HEK293 (cell line): ENCODE measurements at regions of chr2 and their contacts with region 1.

Region 1: GRCh38 chr2:26846328-26847306 is 1.3 kb upstream of the DPYSL5 start:
- H3K4me3 ChIP-seq: no peak overlapping the region
- H3K27ac ChIP-seq: no peak overlapping the region; the same call in 1 of the 2 replicates
- H3K4me1 ChIP-seq: peaks cover 3% of the 10 kb centered on the region
- CTCF ChIP-seq: peak; percentile 95

Region 2: DNA sequence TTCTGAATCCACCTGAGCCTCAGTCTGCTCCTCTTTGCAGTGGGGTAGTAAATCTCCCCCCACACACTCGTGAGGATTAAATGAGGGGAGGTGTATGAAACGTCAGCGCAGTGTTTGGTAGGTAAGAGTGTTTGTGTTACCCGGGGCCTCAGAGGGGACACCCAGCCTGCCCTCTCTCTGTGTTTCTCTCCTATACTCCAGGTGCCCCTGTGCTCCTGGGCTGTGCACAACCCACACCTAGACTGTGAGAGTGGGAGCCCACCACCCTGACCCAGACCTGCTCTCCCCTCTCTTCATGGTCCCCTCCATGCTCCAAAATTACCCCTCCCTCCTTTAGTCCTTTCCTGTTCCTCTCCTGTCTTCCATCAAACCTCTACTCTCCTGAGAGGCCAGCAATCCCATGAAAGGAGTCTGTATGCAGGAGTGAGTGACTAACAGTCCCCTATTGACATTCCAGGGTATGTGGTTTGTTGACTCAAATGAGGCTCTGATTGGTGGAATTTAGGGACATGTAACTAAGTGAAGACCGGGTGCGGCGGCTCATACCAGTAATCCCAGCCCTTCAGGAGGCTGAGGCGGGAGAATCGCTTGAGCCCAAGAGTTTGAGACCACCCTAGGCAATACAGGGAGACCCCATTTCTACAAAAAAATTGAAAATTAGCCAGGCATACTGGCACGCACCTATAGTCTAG is 215.8 kb before region 1 on chr2:
- CTCF ChIA-PET with region 1: no interaction called
- POLR2A ChIA-PET with region 1: no interaction called
- H3K4me3 ChIP-seq: no peak overlapping the region
- H3K27ac ChIP-seq: no peak overlapping the region
- H3K4me1 ChIP-seq: no peaks in the 10 kb centered on the region
- CTCF ChIP-seq: no peak

Region 3: GRCh38 chr2:26911911-26912861 is 65.6 kb after region 1 on chr2:
- CTCF ChIA-PET with region 1: interaction called, 28 read pairs
- POLR2A ChIA-PET with region 1: interaction called, 5 read pairs
- H3K4me3 ChIP-seq: no peak overlapping the region
- H3K27ac ChIP-seq: no peak overlapping the region
- H3K4me1 ChIP-seq: no peaks in the 10 kb centered on the region
- CTCF ChIP-seq: no peak

Region 4: GRCh38 chr2:26933431-26934334 is 87.1 kb after region 1 on chr2:
- CTCF ChIA-PET with region 1: interaction called, 22 read pairs
- POLR2A ChIA-PET with region 1: no interaction called
- H3K4me3 ChIP-seq: no peak overlapping the region
- H3K27ac ChIP-seq: no peak overlapping the region
- H3K4me1 ChIP-seq: no peaks in the 10 kb centered on the region
- CTCF ChIP-seq: no peak

Region 5: DNA sequence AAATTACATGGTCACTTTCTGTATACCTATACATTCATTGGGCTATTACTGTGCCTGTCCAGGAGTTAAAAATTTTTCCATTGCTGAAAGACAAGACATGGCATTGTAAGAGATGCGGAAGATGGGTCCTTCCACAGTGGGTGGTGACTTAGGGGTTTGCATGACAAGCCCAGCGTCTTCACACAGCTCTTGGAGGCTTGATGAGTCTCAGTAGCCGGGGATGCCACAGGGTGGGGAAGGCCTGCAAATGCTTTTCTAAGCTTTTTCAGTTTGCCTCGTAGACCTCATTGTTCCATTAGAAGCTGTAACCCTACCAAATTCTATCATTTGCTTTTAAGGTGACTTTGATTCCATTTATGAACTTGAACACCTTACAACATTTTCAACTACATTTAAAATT is 105.8 kb after region 1 on chr2:
- CTCF ChIA-PET with region 1: interaction called, 62 read pairs
- POLR2A ChIA-PET with region 1: interaction called, 5 read pairs
- H3K4me3 ChIP-seq: no peak overlapping the region
- H3K27ac ChIP-seq: no peak overlapping the region
- H3K4me1 ChIP-seq: peaks cover under 1% of the 10 kb centered on the region; the same call in 1 of the 2 replicates
- CTCF ChIP-seq: no peak

Region 6: GRCh38 chr2:27016801-27017325 is 170.2 kb after region 1 on chr2:
- CTCF ChIA-PET with region 1: interaction called, 53 read pairs
- POLR2A ChIA-PET with region 1: no interaction called
- H3K4me3 ChIP-seq: no peak overlapping the region
- H3K27ac ChIP-seq: no peak overlapping the region
- H3K4me1 ChIP-seq: 0 out of 2 replicates have a peak, but pooled peaks cover 3% of the 10 kb centered on the region
- CTCF ChIP-seq: peak; percentile 29; the same call in 1 of the 2 replicates